GM10248 (cell line): ENCODE measurements at regions of chr18 and their contacts with region 1.

Region 1: DNA sequence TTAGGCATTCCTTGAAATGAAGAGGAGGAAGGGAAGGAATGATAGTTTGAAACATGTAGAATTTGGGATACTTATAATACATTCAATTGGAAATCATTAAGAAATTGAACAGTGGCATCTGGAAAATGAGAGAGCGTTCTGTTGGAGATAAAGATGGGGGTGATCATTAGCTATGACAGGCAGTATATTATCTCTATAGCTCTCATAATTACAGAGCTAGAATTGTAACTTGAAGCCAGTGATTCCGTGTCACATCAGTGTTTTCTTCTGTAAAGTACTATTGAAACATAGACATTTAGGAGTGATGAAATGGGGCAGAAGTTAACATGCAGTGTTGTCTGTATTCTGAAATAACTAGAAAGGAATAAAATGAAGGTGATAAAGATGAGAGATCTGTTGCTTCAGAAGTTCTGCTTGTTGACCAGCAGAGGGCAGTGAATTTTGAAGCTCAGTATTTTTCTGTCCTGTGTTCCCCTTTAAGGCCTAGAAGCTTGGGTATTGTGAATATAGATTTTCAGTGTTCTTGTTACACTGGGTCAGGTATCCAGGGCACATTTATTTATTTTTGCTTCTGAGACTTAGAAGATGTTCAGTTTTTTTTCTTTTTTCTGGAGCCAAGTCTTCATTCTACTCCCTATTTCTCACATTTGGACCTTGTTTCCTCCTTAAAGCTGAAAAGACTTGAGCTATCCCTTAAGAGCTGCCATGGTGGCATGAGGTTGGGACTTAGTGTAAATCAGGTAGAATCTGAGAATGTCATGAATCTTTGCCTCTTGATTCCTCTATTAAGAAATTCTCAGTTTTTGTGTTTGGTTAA is 157.4 kb downstream of the TAF4B start:
- DNase-seq: peak; percentile 47
- CTCF ChIP-seq: peak; percentile 75

Region 2: DNA sequence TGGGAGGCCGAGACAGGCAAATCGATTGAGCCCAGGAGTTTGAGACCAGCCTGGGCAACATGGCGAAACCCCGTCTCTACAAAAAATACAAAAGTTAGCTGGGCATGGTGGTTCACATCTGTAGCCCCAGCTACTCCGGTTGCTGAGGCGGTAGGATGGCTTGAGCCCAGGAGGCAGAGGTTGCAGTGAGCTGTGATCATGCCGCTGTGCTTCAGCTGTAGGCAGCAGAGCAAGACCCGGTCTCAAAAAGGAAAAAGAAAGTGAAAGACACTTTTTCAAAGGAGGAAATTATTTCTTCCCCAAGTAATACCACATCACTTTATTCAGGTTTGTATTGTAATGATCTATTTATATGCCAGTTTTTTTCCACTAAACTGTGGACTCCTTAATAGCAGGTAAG is 193.2 kb before region 1 on chr18:
- CTCF ChIA-PET with region 1: no interaction called
- POLR2A ChIA-PET with region 1: no interaction called
- DNase-seq: peak; percentile 37
- CTCF ChIP-seq: no peak

Region 3: DNA sequence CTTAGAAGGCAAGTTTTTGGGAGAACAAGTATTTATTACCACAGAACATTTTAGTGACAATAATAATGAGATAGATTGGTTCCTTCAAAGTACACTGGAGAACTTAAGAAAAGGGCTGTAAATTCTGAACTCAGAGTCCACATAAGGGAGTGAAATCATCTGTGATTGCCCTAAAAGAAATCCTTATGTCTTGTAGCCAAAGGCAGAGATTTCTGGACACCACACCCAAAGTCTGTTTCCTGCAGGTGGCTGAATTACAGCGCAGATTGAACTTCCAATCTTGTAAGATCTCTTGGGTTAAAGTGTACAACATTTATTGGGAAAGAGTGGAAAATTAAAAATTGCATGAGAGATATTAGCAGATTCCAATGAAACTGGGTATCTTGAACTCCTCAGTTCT is 13.6 kb before region 1 on chr18:
- CTCF ChIA-PET with region 1: interaction called, 94 read pairs
- POLR2A ChIA-PET with region 1: no interaction called
- DNase-seq: no peak
- CTCF ChIP-seq: no peak

Region 4: DNA sequence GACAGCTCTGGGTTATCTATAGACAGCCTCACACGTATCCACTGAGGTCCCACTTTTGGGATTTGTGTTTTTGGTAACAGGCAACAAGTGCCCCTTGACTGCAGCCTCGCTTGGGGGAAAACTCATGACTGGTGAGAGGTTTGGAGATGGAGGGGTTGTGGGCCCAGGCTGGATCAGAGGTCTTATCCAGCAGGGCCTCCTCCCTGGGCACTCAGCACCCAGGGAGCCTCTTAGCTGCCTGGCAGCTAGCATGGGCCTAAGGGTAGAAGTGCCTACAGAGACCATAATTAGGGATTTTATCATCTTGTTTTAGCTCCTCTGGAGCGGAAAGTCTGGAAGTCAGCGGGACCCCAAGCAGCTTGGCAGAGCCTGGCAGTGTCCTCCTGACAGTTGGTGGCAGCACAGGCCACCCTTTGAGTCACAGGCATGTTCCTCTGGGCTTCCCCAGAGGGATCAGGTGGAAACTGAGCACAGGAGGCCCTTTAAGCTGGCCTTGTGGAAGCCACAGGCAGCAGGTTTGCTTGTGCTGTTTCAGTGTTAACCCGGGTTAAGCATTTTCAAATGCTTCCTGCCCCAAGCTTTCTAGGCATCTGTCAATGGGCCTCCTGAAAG is 21.6 kb after region 1 on chr18:
- CTCF ChIA-PET with region 1: interaction called, 48 read pairs
- POLR2A ChIA-PET with region 1: interaction called, 4 read pairs
- DNase-seq: peak; percentile 78
- CTCF ChIP-seq: peak; percentile 74

Region 5: GRCh38 chr18:26460449-26461091 is 76.9 kb after region 1 on chr18:
- CTCF ChIA-PET with region 1: interaction called, 12 read pairs
- POLR2A ChIA-PET with region 1: no interaction called
- DNase-seq: peak; percentile 59
- CTCF ChIP-seq: no peak

Region 6: GRCh38 chr18:26650310-26651268 is 266.9 kb after region 1 on chr18:
- CTCF ChIA-PET with region 1: interaction called, 24 read pairs
- POLR2A ChIA-PET with region 1: no interaction called
- DNase-seq: no peak
- CTCF ChIP-seq: no peak